HepG2 (cell line): ENCODE measurements at regions of chr13 and their contacts with region 1.

Region 1: GRCh38 chr13:36818804-36819738 is at the start of gene RFXAP:
- DNase-seq: peak; percentile 74
- ATAC-seq: peak; percentile 93
- H3K4me3 ChIP-seq: peak within 1 kb of the TSS; percentile 71 to 84 (median 77)
- H3K27ac ChIP-seq: peak within 1 kb of the TSS; percentile 63
- H3K4me1 ChIP-seq: peaks cover 46% of the 10 kb centered on the region
- H3K27me3 ChIP-seq: no peaks in the 10 kb centered on the region; a peak in 1 of 5 replicates
- CTCF ChIP-seq: peak; percentile 22; the same call in 1 of the 2 replicates
- EP300 ChIP-seq: no peak
- POLR2A ChIP-seq: peak; percentile 62 to 78
- RAD21 ChIP-seq: peak; percentile 25; the same call in 1 of the 2 replicates
- total RNA-seq, gene RFXAP: 1.8 and 4.4 TPM in 2 replicates

Region 2: GRCh38 chr13:37058910-37059847 is 240.1 kb after region 1 on chr13 and contains the start of gene SUPT20H:
- CTCF ChIA-PET with region 1: no interaction called
- POLR2A ChIA-PET with region 1: no interaction called
- in situ Hi-C with region 1: no loop called
- intact Hi-C with region 1: loop called (anchors 2 kb)
- DNase-seq: peak; percentile 77
- ATAC-seq: peak; percentile 98
- H3K4me3 ChIP-seq: peak within 1 kb of the TSS; percentile 69 to 89 (median 86)
- H3K27ac ChIP-seq: peak within 1 kb of the TSS; percentile 71
- H3K4me1 ChIP-seq: peaks cover 18% of the 10 kb centered on the region
- H3K27me3 ChIP-seq: peaks cover 0 to 3% of the 10 kb centered on the region in 2 experiments; a peak in 1 of 5 replicates
- CTCF ChIP-seq: peak; percentile 16; the same call in 1 of the 2 replicates
- EP300 ChIP-seq: no peak
- POLR2A ChIP-seq: peak; percentile 56 to 68
- RAD21 ChIP-seq: no peak
- total RNA-seq, gene SUPT20H: 33.9 and 35.0 TPM in 2 replicates